Dendritic cell treated with granulocyte-macrophage colony-stimulating factor and Interleukin-4, amounts not matched to agents 40 ng/mL and 50 ng/mL, for 4 days (primary cell): ENCODE measurements at regions of chr5 and their contacts with region 1.

Region 1: GRCh38 chr5:167688341-167689130 is 602.9 kb upstream of the WWC1 start:
- H3K4me3 Mint-ChIP-seq: no peak overlapping the region
- H3K27ac Mint-ChIP-seq: no peak overlapping the region
- H3K4me1 Mint-ChIP-seq: no peaks in the 10 kb centered on the region
- H3K27me3 Mint-ChIP-seq: no peaks in the 10 kb centered on the region

Region 2: GRCh38 chr5:167754501-167755021 is 66.0 kb after region 1 on chr5:
- intact Hi-C with region 1: loop called (anchors 2 kb)
- H3K4me3 Mint-ChIP-seq: no peak overlapping the region
- H3K27ac Mint-ChIP-seq: no peak overlapping the region
- H3K4me1 Mint-ChIP-seq: peaks cover 19% of the 10 kb centered on the region
- H3K27me3 Mint-ChIP-seq: peaks cover 6% of the 10 kb centered on the region